Lower lobe of right lung (tissue), 2 donors: ENCODE measurements at regions of chr2 and their contacts with region 1.

Region 1: DNA sequence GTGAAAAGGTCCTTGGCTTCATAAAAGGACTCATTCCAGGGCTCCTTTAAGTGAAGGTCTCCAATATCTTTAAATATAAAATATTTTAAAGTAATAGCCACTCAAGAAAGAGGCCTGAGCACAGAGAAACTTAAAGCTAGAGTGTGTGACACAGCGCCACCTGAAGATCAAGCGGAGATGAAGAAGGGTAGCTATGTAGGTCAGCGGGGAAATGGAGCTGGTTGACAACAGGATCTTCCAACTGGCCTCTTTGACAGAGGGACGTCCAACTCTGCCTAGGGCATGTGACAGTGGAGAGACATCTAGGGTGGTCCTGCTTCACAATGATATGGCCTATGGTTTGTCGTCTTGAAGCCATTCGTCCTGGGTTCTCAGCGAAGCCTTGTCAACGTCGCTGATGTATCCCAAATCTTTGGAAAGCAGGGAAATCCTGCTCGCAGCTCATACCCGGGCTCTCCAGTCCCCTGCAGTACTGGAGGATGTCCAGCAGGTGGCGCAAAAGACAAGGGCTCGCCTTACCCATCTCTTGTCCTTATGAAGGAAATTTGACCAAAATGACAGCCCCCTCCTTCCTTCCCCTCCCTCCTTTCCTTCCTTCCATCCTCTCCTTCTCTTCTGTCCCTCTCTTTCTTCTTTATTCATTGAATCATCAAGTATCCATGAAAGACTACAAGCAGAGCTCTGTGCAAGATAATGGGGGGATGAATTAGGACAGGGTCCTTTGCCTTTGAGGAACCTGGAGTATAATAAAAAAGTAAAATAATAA is 59.6 kb downstream of the LONRF2 start:
- DNase-seq: peak; percentile 76
- ATAC-seq: peak; percentile 79 to 84
- H3K4me3 ChIP-seq: no peak overlapping the region
- H3K27ac ChIP-seq: no peak overlapping the region
- H3K4me1 ChIP-seq: peaks cover 8% of the 10 kb centered on the region
- H3K27me3 ChIP-seq: no peaks in the 10 kb centered on the region
- CTCF ChIP-seq: peak; percentile 98

Region 2: DNA sequence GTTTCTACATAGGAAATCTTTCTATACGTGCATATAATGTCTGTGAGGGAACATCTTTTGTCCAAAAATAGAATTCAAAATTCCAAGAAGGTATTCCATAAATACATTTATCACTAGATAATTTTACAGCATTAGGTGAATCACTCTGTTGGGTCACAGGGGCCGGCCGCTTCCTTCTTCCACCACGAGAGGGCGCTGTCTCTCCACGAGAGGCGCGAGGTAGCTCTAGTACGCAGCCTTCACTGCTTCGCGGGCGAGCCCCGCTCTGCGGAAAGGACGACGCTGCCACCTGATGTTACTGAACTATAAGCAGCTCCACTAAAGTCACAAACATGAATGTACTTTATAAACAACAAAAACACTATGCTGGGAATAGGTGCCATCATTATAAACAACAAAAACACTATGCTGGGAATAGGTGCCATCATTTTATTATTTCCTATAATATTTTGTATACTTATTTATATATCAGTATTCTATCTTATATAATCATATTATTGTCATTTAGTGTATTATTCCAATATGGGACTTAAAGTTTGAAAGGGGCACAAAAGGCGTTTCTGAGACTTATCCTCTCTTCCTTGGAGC is 703.6 kb before region 1 on chr2:
- intact Hi-C with region 1: loop called (anchors 5 kb)
- DNase-seq: peak; percentile 91
- ATAC-seq: peak; percentile 97
- H3K4me3 ChIP-seq: no peak overlapping the region
- H3K27ac ChIP-seq: no peak overlapping the region
- H3K4me1 ChIP-seq: no peaks in the 10 kb centered on the region
- H3K27me3 ChIP-seq: no peaks in the 10 kb centered on the region
- CTCF ChIP-seq: peak; percentile 99

Region 3: DNA sequence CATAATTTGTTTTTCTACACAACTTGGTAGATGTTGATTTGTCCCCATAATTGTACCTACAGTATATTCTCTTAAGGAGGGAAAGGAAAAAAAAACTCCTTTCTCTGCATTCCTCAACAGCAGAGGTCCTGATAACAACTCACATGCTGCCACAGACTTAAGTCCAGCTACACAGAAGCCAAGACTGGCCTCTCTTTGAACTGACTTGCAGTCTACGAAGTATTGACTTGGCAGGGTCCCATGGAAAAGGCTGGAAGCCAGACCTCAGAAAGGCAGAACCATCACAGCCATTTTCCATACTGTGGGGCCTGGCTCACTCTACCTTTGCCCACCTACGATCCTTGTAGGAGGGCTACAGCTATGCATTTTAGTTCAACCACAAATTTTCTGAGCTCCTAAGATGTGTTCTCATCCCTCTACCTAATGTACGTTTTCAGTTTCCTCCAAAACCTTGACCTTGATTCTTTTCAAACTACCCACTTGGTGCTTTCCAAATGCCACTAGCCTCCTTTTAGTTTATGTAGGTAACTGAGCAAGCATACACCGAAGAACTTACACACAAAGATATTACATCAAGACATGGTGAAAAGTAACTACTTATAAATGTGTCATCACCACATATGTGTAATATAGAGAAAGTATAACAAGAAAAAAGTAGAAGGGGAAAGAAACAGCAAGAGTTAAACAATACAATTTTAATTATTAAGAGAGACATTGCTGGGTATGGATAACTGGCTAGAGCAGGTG is 47.4 kb after region 1 on chr2:
- intact Hi-C with region 1: no loop called
- DNase-seq: no peak
- ATAC-seq: no peak
- H3K4me3 ChIP-seq: no peak overlapping the region
- H3K27ac ChIP-seq: no peak overlapping the region
- H3K4me1 ChIP-seq: no peaks in the 10 kb centered on the region
- H3K27me3 ChIP-seq: no peaks in the 10 kb centered on the region
- CTCF ChIP-seq: no peak

Region 4: DNA sequence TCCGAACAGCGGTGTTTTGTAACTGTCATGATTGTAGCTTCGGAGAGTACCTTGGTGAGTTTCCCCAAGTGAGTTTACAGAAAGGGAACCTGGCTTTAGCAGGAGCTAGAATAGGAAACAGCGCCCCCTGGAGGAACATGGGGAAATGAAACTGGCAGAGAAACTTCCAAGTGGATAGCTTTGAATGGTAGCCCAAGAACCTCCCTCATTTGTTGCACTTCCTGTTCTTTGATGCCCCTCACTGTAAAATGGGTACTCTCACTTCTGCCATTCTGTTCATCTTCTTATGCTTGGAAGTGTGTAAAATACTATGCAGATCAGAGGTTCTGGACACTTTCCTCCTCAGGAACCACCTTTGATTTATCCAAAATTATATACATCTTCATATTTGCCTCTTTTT is 118.5 kb after region 1 on chr2:
- intact Hi-C with region 1: loop called (anchors 5 kb)
- DNase-seq: peak; percentile 73
- ATAC-seq: peak; percentile 81 to 87
- H3K4me3 ChIP-seq: no peak overlapping the region
- H3K27ac ChIP-seq: no peak overlapping the region
- H3K4me1 ChIP-seq: peaks cover 5% of the 10 kb centered on the region
- H3K27me3 ChIP-seq: no peaks in the 10 kb centered on the region
- CTCF ChIP-seq: peak; percentile 89

Region 5: GRCh38 chr2:100394111-100394641 is 131.4 kb after region 1 on chr2:
- intact Hi-C with region 1: no loop called
- DNase-seq: no peak
- ATAC-seq: no peak
- H3K4me3 ChIP-seq: no peak overlapping the region
- H3K27ac ChIP-seq: no peak overlapping the region
- H3K4me1 ChIP-seq: no peaks in the 10 kb centered on the region
- H3K27me3 ChIP-seq: no peaks in the 10 kb centered on the region
- CTCF ChIP-seq: no peak